Mammary epithelial cell (primary cell): ENCODE measurements at regions of chr7 and their contacts with region 1.

Region 1: DNA sequence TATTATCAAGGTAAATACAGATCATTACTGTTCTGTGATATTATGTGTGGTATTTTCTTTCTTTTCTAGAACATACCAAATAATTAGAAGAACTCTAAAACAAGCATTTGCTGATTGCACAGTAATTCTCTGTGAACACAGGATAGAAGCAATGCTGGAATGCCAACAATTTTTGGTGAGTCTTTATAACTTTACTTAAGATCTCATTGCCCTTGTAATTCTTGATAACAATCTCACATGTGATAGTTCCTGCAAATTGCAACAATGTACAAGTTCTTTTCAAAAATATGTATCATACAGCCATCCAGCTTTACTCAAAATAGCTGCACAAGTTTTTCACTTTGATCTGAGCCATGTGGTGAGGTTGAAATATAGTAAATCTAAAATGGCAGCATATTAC is 185.6 kb downstream of the CFTR start:
- DNase-seq: no peak
- H3K4me3 ChIP-seq: no peak overlapping the region
- H3K27ac ChIP-seq: no peak overlapping the region
- H3K4me1 ChIP-seq: no peaks in the 10 kb centered on the region
- H3K27me3 ChIP-seq: no peaks in the 10 kb centered on the region
- CTCF ChIP-seq: no peak

Region 2: DNA sequence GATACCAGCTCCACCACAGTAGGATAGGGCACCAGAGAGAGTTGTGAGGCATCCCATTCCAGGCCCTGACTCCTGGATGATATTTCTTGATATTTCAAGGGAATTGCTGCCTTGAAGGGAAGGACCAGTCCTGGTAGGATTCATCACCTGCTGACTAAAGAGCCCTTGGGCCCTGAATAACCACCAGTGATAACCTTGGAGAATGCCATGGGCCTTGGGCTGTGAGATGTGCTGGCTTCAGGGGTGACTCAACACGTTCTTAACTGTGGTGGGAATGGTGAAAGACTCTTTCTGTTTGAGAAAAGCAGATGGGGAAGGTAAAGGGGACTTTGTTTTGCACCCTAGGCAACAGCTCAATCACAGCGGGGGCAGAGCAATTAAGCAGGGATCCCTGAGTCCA is 216.7 kb before region 1 on chr7:
- CTCF ChIA-PET with region 1: interaction called, 10 read pairs
- dilution Hi-C with region 1: no loop called
- in situ Hi-C with region 1: no loop called
- intact Hi-C with region 1: no loop called
- DNase-seq: peak; percentile 70
- H3K4me3 ChIP-seq: no peak overlapping the region
- H3K27ac ChIP-seq: peak overlapping the region; percentile 16
- H3K4me1 ChIP-seq: peaks cover 25% of the 10 kb centered on the region
- H3K27me3 ChIP-seq: no peaks in the 10 kb centered on the region
- CTCF ChIP-seq: no peak

Region 3: DNA sequence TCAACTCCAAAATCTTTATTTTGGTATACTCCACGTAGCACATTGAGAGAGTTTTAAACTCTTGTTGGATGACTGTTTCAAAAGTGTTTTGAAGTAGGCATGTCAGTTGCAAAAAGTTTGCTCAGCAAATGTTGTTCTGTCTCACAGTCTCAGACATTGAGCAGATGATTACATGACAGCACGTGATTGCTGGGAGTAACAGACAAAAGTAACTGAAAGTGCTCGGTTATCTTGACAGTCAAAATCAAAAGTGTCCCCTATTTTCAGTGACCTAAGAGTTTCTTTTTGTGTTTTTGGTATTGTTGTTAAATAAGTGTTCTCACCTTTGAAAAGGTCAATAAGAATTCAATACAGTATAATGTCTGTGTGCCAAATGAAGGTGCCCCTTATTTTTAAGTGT is 101.3 kb before region 1 on chr7:
- CTCF ChIA-PET with region 1: no interaction called
- dilution Hi-C with region 1: no loop called
- in situ Hi-C with region 1: no loop called
- intact Hi-C with region 1: no loop called
- DNase-seq: no peak
- H3K4me3 ChIP-seq: no peak overlapping the region
- H3K27ac ChIP-seq: no peak overlapping the region
- H3K4me1 ChIP-seq: no peaks in the 10 kb centered on the region
- H3K27me3 ChIP-seq: peaks cover 3% of the 10 kb centered on the region
- CTCF ChIP-seq: no peak

Region 4: GRCh38 chr7:117698018-117698417 is 32.6 kb after region 1 on chr7:
- CTCF ChIA-PET with region 1: no interaction called
- dilution Hi-C with region 1: no loop called
- in situ Hi-C with region 1: no loop called
- intact Hi-C with region 1: no loop called
- DNase-seq: no peak
- H3K4me3 ChIP-seq: no peak overlapping the region
- H3K27ac ChIP-seq: no peak overlapping the region
- H3K4me1 ChIP-seq: no peaks in the 10 kb centered on the region
- H3K27me3 ChIP-seq: no peaks in the 10 kb centered on the region
- CTCF ChIP-seq: no peak

Region 5: DNA sequence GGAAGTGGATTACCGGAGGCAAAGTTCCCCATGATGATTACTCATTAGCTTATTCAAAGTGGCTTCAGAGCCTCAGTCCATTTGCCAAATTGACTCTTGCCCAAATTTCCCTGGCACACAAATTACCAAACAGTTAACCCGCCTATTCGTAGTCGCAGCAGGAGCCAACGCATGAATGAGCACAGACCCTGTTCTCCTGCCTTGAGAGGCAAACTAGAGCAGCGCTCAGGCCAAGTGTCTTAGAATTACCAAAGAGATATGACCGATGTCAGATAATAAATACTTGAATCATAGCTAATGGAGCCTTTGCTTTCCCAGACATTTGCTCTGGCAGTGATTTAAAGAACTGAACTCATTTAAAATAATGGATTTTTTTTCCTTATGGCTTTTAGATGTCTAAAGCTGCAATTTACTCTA is 143.0 kb after region 1 on chr7:
- CTCF ChIA-PET with region 1: no interaction called
- dilution Hi-C with region 1: no loop called
- in situ Hi-C with region 1: no loop called
- intact Hi-C with region 1: no loop called
- DNase-seq: no peak
- H3K4me3 ChIP-seq: no peak overlapping the region
- H3K27ac ChIP-seq: no peak overlapping the region
- H3K4me1 ChIP-seq: no peaks in the 10 kb centered on the region
- H3K27me3 ChIP-seq: no peaks in the 10 kb centered on the region
- CTCF ChIP-seq: no peak